ENCODE measurements at regions of chr12 and their contacts with region 1.

Region 1: DNA sequence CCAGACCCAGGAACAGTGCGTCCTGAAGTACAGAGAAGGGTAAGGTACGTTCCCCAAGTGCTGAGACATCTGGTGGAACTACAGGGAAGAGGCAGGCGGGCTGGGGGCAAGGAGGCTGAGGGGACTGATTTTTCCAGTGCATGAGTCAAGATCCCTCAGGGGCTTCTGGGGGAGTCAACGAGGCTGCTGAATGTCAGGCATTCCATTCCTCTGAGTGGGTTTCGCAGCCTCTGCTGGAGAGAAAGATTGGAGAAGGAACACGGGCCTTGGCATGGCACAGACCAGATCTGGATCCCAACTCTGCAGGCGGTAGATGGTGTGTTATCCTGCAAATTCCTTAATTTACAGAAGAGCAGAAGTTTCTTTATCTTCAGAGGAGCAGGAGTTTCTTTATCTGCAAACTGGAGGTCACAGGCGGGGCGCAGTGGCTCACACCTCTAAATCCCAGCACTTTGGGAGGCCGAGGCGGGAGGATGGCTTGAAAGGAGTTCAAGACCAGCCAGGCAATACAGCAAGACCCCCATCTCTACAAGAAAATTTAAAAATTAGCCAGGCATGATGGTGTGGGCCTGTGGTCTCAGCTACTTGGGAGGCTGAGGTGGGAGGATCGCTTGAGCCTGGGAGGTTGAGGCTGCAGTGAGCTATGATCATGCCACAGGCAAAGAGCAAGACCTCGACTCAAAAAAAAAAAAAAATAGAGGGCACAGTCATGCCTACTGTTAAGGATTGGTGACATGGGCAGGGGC is 132.6 kb upstream of the MAP1LC3B2 start:
- DNase-seq: peak; percentile 91
- H3K4me3 ChIP-seq: no peak overlapping the region
- H3K27ac ChIP-seq: peak overlapping the region; percentile 21
- H3K4me1 ChIP-seq: peaks cover 20% of the 10 kb centered on the region
- H3K27me3 ChIP-seq: no peaks in the 10 kb centered on the region
- CTCF ChIP-seq: peak; percentile 50 to 70

Region 2: DNA sequence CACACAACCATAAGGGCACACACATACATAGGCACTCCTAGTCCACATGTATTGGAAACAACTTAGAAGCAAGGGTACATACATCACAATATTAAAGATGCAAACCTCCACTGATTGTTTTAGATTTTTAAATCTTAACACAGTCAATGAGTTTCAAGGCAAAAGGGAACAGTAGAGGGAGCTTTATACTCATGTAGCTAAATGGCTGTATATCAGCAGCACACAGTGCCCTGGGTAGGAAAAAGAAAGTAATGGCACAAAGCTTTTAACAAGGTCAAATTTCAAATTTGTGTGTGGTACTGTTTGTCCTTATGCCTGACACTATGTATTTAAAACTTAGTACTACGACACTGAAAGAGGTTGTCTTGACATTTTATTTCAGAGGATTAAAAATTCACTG is 411.0 kb before region 1 on chr12:
- CTCF ChIA-PET with region 1: no interaction called
- dilution Hi-C with region 1: no loop called
- in situ Hi-C with region 1: no loop called
- intact Hi-C with region 1: loop called (anchors 10 kb)
- DNase-seq: peak; percentile 31
- H3K4me3 ChIP-seq: no peak overlapping the region
- H3K27ac ChIP-seq: no peak overlapping the region
- H3K4me1 ChIP-seq: no peaks in the 10 kb centered on the region
- H3K27me3 ChIP-seq: no peaks in the 10 kb centered on the region
- CTCF ChIP-seq: peak; percentile 19 to 56

Region 3: GRCh38 chr12:116142936-116143898 is 283.3 kb before region 1 on chr12:
- CTCF ChIA-PET with region 1: no interaction called
- dilution Hi-C with region 1: no loop called
- in situ Hi-C with region 1: no loop called
- intact Hi-C with region 1: loop called (anchors 10 kb)
- DNase-seq: peak; percentile 75
- H3K4me3 ChIP-seq: no peak overlapping the region
- H3K27ac ChIP-seq: peak overlapping the region; percentile 33
- H3K4me1 ChIP-seq: peaks cover 26% of the 10 kb centered on the region
- H3K27me3 ChIP-seq: no peaks in the 10 kb centered on the region
- CTCF ChIP-seq: no peak

Region 4: GRCh38 chr12:116222358-116222757 is 204.2 kb before region 1 on chr12:
- CTCF ChIA-PET with region 1: no interaction called
- dilution Hi-C with region 1: no loop called
- in situ Hi-C with region 1: no loop called
- intact Hi-C with region 1: no loop called
- DNase-seq: peak; percentile 90
- H3K4me3 ChIP-seq: no peak overlapping the region
- H3K27ac ChIP-seq: peak overlapping the region; percentile 22
- H3K4me1 ChIP-seq: peaks cover 5% of the 10 kb centered on the region
- H3K27me3 ChIP-seq: no peaks in the 10 kb centered on the region
- CTCF ChIP-seq: no peak

Region 5: DNA sequence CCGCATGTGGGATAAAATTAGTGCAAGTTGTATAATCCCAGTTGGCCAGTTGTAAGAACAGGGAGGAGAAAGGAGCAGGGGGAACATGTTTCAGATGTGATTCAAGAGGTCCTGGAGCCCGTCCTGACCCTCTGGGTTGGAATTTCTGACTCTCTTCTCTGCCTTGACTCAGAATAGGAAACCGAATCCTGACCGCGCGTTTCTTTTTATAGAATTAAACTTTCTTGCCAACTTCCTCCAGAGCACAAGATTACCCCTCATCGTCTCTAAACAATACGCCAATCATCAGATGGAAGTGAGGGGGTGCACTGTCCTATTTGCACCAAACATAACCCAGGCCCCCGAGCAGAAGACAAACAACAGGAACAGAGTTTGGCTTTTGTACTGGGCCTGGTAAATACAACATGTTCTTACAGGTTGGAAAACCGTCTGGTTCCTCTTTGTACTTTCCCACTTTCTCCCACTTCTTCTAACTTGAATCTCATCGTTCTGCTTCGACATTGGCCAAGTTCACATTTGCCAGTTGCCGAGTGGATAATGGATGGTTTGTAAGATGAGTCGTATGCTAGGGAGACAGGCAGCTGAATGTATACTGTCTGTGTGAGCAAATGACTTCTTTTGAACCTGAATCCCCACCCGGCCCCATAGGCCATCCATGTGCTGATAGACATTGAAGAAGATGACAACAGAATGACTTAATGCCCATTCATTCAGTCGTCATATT is 106.5 kb before region 1 on chr12:
- CTCF ChIA-PET with region 1: no interaction called
- dilution Hi-C with region 1: no loop called
- in situ Hi-C with region 1: no loop called
- intact Hi-C with region 1: loop called (anchors 2 kb)
- DNase-seq: peak; percentile 86
- H3K4me3 ChIP-seq: peak overlapping the region in 1 of 3 experiments; percentile 13
- H3K27ac ChIP-seq: peak overlapping the region; percentile 86
- H3K4me1 ChIP-seq: peaks cover 32% of the 10 kb centered on the region
- H3K27me3 ChIP-seq: no peaks in the 10 kb centered on the region
- CTCF ChIP-seq: no peak

Region 6: GRCh38 chr12:116408489-116409250 is 17.9 kb before region 1 on chr12:
- CTCF ChIA-PET with region 1: no interaction called
- dilution Hi-C with region 1: no loop called
- in situ Hi-C with region 1: no loop called
- intact Hi-C with region 1: loop called (anchors 1 kb)
- DNase-seq: no peak
- H3K4me3 ChIP-seq: no peak overlapping the region
- H3K27ac ChIP-seq: no peak overlapping the region
- H3K4me1 ChIP-seq: peaks cover 6% of the 10 kb centered on the region
- H3K27me3 ChIP-seq: no peaks in the 10 kb centered on the region
- CTCF ChIP-seq: no peak

Region 7: DNA sequence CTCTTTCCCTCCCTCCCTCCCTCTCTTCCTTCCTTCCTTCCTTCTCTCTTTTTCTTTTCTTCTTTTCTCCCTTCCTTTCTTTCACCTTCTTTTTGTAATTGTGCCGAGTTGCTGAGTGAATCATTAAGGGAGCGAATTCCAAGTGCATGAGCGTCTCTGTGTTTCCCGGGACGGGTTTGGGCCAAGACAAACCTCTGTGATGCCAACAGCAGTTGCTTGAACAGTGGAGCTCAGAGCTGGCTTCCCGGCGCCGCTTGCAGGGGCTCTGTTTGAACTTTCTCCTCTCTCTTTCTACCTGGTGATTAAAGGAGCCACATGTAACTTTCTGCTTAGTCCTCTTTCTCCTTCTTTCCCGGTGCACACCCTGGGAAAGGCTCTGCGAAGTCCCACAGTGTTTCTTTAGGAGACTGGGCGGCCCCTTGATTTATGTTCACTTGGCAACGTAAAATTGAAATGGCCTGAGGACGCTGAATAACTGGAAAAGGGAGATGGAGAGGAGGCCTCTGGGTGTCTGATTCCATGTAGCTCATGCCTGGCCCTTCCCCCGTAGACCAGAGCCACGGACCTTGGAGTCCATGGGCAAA is 98.9 kb after region 1 on chr12:
- CTCF ChIA-PET with region 1: no interaction called
- dilution Hi-C with region 1: no loop called
- in situ Hi-C with region 1: no loop called
- intact Hi-C with region 1: loop called (anchors 5 kb)
- DNase-seq: peak; percentile 89
- H3K4me3 ChIP-seq: peak overlapping the region in 2 of 3 experiments; percentile 12 to 13
- H3K27ac ChIP-seq: peak overlapping the region; percentile 93
- H3K4me1 ChIP-seq: peaks cover 54% of the 10 kb centered on the region
- H3K27me3 ChIP-seq: no peaks in the 10 kb centered on the region
- CTCF ChIP-seq: no peak